Left cardiac atrium (tissue), 4 donors: ENCODE measurements at regions of chr17 and their contacts with region 1.

Region 1: GRCh38 chr17:13002766-13003451 is 14.9 kb downstream of the ELAC2 start:
- DNase-seq: peak; percentile 88
- ATAC-seq: peak; percentile 87 to 90

Region 2: GRCh38 chr17:12007466-12007865 is 995.4 kb before region 1 on chr17:
- intact Hi-C with region 1: no loop called
- DNase-seq: no peak
- ATAC-seq: no peak

Region 3: DNA sequence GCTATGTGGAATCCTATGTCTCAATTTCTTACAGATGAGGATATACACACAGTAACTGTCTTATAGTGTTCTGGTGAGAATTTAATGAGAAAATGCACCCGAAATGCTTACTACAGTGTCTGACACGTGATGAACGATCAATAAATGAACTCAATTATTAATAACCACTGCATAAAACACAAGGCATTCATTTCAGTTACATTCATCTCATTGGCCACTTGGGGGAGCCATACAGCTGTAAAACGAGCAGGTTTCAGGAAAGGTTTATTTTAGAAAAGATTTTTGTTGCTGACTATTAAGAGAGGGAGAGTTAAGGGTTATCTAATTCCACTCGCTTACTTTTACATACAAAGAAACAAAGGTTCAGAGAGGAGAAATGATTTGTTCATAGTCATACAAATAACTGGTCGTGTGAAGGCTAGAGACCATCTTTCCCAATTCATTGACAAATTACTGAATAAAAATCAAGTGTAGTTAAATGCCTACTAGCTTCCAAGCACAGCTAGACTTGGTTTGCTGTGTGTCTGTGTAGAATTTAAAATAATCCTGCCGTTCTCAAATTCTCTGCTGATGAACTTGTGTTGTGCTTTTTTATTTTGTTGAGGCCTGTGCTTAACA is 822.2 kb before region 1 on chr17:
- intact Hi-C with region 1: loop called (anchors 2 to 10 kb)
- DNase-seq: no peak
- ATAC-seq: peak; percentile 72 to 74

Region 4: DNA sequence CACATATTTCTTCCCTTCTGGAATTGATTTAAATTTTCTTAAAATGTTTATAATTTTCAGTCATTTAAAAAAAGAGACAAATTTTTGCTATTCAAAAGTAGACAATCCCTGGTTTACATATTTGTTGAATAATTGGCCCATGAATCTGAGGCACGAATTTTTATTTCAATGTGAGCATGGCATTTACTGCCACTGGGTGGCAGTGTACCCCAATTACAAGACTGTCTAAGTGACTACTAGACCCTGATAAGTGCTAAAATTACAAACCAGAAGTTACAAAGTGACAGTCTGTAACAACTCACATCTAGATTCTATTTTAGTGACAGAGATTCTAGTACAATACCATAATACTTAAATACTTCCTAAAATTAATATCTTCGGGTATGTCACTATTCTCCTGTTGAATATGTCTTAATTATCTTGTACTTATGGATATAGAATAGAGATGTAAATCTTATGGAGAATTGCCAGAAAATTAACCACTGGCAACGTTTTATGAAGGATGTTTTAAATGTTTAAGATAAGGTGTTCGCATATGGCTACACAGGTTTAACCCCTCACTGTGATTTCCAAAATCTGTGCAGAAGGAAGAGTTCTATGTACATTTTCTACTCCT is 746.4 kb before region 1 on chr17:
- intact Hi-C with region 1: loop called (anchors 2 to 10 kb)
- DNase-seq: peak; percentile 28
- ATAC-seq: peak; percentile 72 to 74

Region 5: GRCh38 chr17:12928741-12929140 is 74.2 kb before region 1 on chr17:
- intact Hi-C with region 1: loop called in 1 of 2 experiments (anchors 5 kb)
- DNase-seq: no peak
- ATAC-seq: peak in 1 of 2 donors; percentile 23

Region 6: GRCh38 chr17:12952012-12952411 is 50.9 kb before region 1 on chr17:
- intact Hi-C with region 1: no loop called
- DNase-seq: no peak
- ATAC-seq: no peak